H1 (cell line): ENCODE measurements at regions of chr15 and their contacts with region 1.

Region 1: DNA sequence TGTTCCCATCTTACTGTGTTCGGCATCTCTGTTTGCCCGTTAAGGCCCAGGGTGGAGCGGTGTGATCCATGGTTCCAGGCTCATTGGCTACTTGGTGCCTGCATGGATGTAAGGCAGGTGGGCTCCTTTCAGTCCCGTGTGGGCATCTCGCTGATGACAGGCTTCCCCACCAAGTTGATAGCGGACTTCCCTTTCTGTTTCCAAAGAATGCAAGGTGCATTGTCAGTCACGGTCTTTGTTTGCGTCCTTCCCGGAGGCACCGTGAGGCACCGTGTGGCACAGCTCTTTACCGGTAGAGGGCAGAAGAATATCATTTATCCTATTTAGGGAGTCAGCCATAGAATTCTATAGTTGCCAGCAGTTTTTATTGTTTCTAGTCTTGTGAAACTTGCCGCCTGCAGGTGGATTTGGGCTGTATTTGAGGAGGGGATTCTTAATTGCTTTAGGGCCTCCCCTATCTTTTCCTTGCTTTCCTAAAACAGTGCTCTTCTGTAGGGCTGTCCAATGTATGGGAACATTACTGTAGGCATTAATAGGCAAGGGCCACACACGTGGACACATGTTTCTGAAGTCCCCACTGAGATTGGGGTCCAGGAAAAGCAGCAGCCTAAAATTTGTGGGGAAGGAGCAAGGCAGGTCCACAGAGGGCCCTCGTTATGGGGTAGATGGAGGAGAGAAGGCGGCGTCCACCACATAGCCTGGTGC is 244.1 kb downstream of the SLCO3A1 start:
- DNase-seq: peak in 1 of 2 experiments; percentile 74
- H3K4me3 ChIP-seq: no peak overlapping the region
- H3K27ac ChIP-seq: no peak overlapping the region
- H3K4me1 ChIP-seq: peaks cover 9 to 20% (median 15%) of the 10 kb centered on the region in 4 experiments
- H3K27me3 ChIP-seq: no peaks in the 10 kb centered on the region; a peak in 2 of 7 replicates
- CTCF ChIP-seq: peak; percentile 83 to 93 (median 90)
- EP300 ChIP-seq: no peak
- POLR2A ChIP-seq: no peak
- RAD21 ChIP-seq: peak; percentile 97 to 98

Region 2: DNA sequence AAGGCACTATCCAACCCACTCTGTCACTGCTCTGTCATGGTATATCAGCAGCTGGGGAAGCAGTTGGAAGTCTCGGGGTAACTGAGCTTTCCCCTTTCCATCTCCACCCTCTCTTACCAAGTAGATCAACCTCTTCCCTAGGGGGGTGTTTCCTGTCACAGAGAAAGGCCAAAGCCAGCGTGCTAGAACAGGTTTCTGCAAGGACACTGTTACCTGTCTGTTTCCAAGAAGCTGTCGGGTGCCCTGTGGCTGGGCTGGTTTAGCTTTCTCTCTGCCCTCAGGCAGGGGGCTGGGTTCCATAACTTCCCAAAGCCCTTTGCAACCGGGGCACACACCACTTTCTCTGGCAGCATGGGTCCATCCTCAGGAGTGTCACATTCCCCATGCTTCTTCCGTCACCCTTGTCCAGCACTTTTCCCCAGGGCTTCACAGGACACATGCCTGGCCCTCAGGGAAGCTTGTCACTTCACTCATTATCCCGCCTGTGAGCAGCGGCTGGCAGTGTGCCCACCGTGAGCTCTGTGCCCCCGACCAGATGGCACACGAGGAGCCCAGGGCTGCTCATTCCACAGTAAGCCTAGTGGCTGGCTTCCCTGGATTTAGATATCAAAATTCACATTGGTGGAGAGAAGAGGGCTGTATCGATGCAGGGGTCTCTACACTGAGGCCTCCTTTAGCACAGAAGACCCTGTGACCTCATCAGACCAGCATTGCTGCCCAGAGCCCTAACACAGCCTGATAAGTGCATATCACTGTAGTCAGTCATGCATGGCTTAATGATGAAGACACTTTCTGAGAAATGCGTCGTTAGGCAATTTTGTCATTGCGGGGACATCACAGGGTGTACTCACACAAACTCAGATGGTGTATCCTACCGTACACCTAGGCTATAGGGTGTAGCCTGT is 38.3 kb before region 1 on chr15:
- CTCF ChIA-PET with region 1: no interaction called
- POLR2A ChIA-PET with region 1: no interaction called
- DNase-seq: no peak
- H3K4me3 ChIP-seq: no peak overlapping the region
- H3K27ac ChIP-seq: no peak overlapping the region
- H3K4me1 ChIP-seq: no peaks in the 10 kb centered on the region
- H3K27me3 ChIP-seq: no peaks in the 10 kb centered on the region; a peak in 1 of 7 replicates
- CTCF ChIP-seq: no peak
- EP300 ChIP-seq: no peak
- POLR2A ChIP-seq: no peak
- RAD21 ChIP-seq: no peak

Region 3: GRCh38 chr15:92146511-92147150 is 49.0 kb after region 1 on chr15:
- CTCF ChIA-PET with region 1: interaction called, 17 read pairs
- POLR2A ChIA-PET with region 1: interaction called, 3 read pairs
- DNase-seq: no peak
- H3K4me3 ChIP-seq: no peak overlapping the region
- H3K27ac ChIP-seq: no peak overlapping the region
- H3K4me1 ChIP-seq: peaks cover 0 to 11% (median 1%) of the 10 kb centered on the region in 4 experiments; a peak in 4 of 7 replicates
- H3K27me3 ChIP-seq: no peaks in the 10 kb centered on the region
- CTCF ChIP-seq: no peak
- EP300 ChIP-seq: no peak
- POLR2A ChIP-seq: no peak
- RAD21 ChIP-seq: no peak

Region 4: GRCh38 chr15:92226014-92226612 is 128.5 kb after region 1 on chr15:
- CTCF ChIA-PET with region 1: interaction called, 71 read pairs
- POLR2A ChIA-PET with region 1: no interaction called
- DNase-seq: no peak
- H3K4me3 ChIP-seq: no peak overlapping the region
- H3K27ac ChIP-seq: no peak overlapping the region
- H3K4me1 ChIP-seq: no peaks in the 10 kb centered on the region
- H3K27me3 ChIP-seq: no peaks in the 10 kb centered on the region
- CTCF ChIP-seq: peak; percentile 12 to 84 (median 74)
- EP300 ChIP-seq: no peak
- POLR2A ChIP-seq: no peak
- RAD21 ChIP-seq: peak; percentile 77 to 88

Region 5: DNA sequence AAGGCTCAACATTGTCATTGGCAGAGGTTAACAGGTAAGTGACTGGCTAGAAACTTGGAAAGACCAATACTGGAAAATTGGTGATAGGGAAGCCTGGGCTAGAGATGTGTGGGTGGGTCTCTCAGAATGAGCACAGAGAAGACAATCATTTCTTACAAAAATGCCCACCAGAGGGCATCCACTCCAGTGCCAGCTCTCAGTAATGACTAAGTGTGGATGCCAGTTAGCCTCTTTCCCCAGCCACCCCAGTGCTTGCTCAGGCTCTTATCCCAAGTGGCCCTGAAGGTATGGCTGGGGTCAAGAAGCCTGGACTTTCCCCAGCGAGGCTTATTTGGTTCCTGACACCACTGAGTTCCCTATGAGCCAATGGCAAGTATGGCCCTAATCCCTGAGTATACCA is 180.2 kb after region 1 on chr15:
- CTCF ChIA-PET with region 1: interaction called, 16 read pairs
- POLR2A ChIA-PET with region 1: no interaction called
- DNase-seq: no peak
- H3K4me3 ChIP-seq: no peak overlapping the region
- H3K27ac ChIP-seq: no peak overlapping the region
- H3K4me1 ChIP-seq: no peaks in the 10 kb centered on the region
- H3K27me3 ChIP-seq: no peaks in the 10 kb centered on the region
- CTCF ChIP-seq: peak in 2 of 3 experiments; percentile 55 to 60; a peak in 3 of 4 replicates
- EP300 ChIP-seq: no peak
- POLR2A ChIP-seq: no peak
- RAD21 ChIP-seq: peak; percentile 47 to 65

Region 6: DNA sequence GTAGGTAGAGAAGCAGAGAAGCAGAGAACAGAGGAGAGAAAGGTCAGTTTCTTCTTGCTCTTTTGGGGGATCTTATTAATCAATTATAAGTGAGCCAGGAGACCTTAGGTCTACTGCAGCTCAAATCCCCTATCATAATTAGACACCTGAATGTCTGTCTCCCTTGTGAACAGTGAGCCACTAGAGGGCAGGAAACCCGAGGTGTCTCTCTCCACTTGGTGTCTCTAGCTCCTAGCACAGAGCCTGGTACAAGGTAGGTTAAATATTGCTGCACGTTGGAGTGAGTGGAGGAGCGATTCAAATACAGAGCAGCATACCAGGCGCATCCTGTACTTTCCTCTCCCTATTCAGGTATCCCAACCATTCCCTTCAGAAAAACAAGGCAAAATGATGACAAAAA is 294.0 kb after region 1 on chr15:
- CTCF ChIA-PET with region 1: interaction called, 10 read pairs
- POLR2A ChIA-PET with region 1: interaction called, 4 read pairs
- DNase-seq: peak in 1 of 2 experiments; percentile 60
- H3K4me3 ChIP-seq: peak overlapping the region in 1 of 4 experiments; percentile 79; a peak in 1 of 8 replicates
- H3K27ac ChIP-seq: no peak overlapping the region
- H3K4me1 ChIP-seq: peaks cover 3 to 17% (median 5%) of the 10 kb centered on the region in 4 experiments
- H3K27me3 ChIP-seq: peaks cover 9 to 39% (median 35%) of the 10 kb centered on the region in 4 experiments
- CTCF ChIP-seq: peak; percentile 45 to 82 (median 80)
- EP300 ChIP-seq: no peak
- POLR2A ChIP-seq: no peak
- RAD21 ChIP-seq: peak; percentile 61 to 74